Mucosa of descending colon (tissue), 3 donors: ENCODE measurements at regions of chr7 and their contacts with region 1.

Region 1: DNA sequence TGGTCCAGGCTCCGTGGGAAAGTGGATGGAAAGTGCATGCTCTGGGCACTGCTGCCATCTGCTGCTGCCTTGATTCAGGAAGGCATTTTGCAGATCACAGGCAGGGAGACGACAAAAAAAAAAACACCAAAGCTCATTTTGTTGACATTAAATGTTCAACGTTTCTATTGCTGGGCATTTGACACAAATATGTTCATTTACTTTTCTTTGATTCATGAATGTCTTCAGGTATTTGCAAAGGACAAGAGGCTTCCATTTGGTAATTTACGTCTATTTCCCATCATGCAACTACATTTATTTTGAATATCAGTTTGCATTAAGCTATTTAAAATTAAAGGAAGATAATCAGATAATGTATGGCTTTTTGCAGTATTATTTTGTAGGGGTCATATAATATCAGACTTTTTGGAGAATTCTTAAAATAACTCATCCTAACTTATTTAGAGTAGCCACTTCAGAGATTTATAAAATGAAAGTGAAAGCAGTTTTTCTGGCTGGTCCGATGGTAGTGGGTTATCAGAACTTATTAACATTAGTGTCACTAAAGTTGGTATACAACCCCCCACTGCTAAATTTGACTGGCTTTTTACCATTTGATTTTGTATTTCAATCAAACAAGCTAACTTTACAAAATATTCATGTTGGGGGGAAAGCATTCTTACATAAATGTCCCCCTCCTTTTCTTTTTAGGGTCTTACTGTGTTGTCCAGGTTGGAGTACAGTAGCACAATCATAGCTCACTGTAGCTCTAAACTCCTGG is 65.3 kb downstream of the PDIA4 start:
- DNase-seq: peak in 2 of 3 donors; percentile 71 to 79
- ATAC-seq: peak; percentile 74
- H3K4me3 ChIP-seq: peak overlapping the region; percentile 4
- H3K4me1 ChIP-seq: no peaks in the 10 kb centered on the region
- CTCF ChIP-seq: peak; percentile 29

Region 2: GRCh38 chr7:148503875-148504487 is 459.0 kb before region 1 on chr7:
- intact Hi-C with region 1: loop called in 1 of 2 experiments (anchors 10 kb)
- DNase-seq: peak in 1 of 3 donors; percentile 20
- ATAC-seq: no peak
- H3K4me3 ChIP-seq: no peak overlapping the region
- H3K4me1 ChIP-seq: no peaks in the 10 kb centered on the region
- CTCF ChIP-seq: peak; percentile 46

Region 3: DNA sequence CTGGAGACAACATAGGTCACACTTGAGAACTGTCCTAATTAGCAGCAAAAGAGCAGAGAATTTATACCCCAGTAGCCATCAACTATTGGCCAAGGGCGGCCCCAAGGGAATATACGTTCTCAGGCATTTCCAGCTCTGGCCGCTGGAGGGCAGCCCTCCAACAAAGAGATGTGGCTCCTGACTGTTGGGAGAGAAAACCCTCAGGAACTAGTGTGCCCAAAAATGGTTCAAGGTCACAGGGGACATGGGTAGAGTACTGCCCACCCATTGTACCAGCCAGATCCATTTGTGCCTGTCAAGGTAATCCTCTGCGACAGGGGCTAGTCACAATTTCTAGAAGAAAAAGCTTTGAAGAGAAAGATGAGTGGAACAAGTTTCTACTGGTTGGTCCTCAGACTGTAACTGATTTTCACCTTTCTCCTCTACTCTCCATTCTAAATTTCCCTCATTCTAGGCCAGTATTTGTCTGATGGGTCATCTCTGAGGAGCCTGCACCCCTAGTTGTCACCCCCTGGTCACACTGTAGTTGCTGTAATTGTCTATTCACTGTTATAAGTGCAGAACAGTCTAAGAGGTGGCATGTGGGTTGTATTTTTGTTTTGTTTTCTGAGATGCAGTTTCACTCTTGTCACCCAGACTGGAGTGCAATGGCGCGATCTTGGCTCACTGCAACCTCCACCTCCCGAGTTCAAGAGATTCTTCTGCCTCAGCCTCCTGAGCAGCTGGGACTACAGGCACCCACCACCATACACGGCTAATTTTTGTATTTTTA is 387.2 kb before region 1 on chr7:
- intact Hi-C with region 1: loop called (anchors 10 kb)
- DNase-seq: peak; percentile 55 to 87 (median 81)
- ATAC-seq: peak; percentile 83
- H3K4me3 ChIP-seq: no peak overlapping the region
- H3K4me1 ChIP-seq: no peaks in the 10 kb centered on the region
- CTCF ChIP-seq: peak; percentile 58

Region 4: GRCh38 chr7:148623586-148624282 is 339.3 kb before region 1 on chr7:
- intact Hi-C with region 1: no loop called
- DNase-seq: no peak
- ATAC-seq: no peak
- H3K4me3 ChIP-seq: no peak overlapping the region
- H3K4me1 ChIP-seq: no peaks in the 10 kb centered on the region
- CTCF ChIP-seq: no peak

Region 5: GRCh38 chr7:148867596-148868377 is 95.2 kb before region 1 on chr7:
- intact Hi-C with region 1: no loop called
- DNase-seq: no peak
- ATAC-seq: no peak
- H3K4me3 ChIP-seq: no peak overlapping the region
- H3K4me1 ChIP-seq: no peaks in the 10 kb centered on the region
- CTCF ChIP-seq: no peak

Region 6: DNA sequence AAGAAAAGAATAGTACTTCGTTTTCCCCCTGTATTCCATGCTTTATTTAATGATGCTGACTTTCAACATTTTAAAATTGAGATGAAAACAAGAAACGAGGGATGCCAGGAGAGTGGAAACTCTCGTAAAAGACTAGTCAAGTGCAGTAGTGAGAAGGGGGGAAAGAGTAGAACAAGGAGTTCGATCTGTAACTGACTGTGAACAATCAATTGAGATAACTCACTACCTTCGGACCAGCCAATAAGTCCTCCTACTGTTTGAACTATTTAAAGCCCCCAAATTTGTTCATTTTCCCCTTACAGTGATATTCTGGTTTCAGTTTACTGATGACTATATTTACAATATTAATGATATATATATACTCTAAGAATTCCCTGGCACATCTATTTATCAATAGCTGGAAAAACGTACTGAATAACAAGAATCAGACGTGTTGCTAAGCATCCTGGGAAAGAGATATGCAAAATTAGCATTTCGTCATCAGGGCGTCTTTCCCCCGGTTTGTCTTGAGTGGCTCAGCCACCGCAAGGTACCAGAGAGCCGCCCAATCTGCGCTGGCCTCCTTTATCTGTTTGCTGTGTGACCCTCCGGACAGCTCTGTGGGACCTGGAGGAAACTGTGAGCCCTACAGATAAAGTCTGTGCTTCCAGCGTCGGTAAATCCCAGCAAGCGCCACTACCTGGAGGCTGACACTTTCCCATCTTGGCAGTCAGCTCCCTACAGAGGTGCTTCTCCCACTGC is 24.2 kb after region 1 on chr7:
- intact Hi-C with region 1: no loop called
- DNase-seq: peak; percentile 81 to 86 (median 86)
- ATAC-seq: peak; percentile 94
- H3K4me3 ChIP-seq: peak overlapping the region; percentile 43
- H3K4me1 ChIP-seq: peaks cover 31% of the 10 kb centered on the region
- CTCF ChIP-seq: no peak